MCF 10A (cell line): ENCODE measurements at regions of chr1 and their contacts with region 1.

Region 1: GRCh38 chr1:159960721-159961381 is 6.8 kb upstream of the SLAMF9 start:
- DNase-seq: peak; percentile 71
- H3K4me3 Mint-ChIP-seq: peak overlapping the region; percentile 73
- H3K27ac Mint-ChIP-seq: peak overlapping the region; percentile 75
- H3K4me1 Mint-ChIP-seq: peaks cover 49% of the 10 kb centered on the region
- H3K27me3 Mint-ChIP-seq: no peaks in the 10 kb centered on the region
- CTCF ChIP-seq: no peak

Region 2: GRCh38 chr1:159686599-159687299 is 274.1 kb before region 1 on chr1:
- CTCF ChIA-PET with region 1: no interaction called
- POLR2A ChIA-PET with region 1: no interaction called
- intact Hi-C with region 1: no loop called
- DNase-seq: no peak
- H3K4me3 Mint-ChIP-seq: no peak overlapping the region
- H3K27ac Mint-ChIP-seq: no peak overlapping the region
- H3K4me1 Mint-ChIP-seq: no peaks in the 10 kb centered on the region
- H3K27me3 Mint-ChIP-seq: no peaks in the 10 kb centered on the region
- CTCF ChIP-seq: no peak

Region 3: DNA sequence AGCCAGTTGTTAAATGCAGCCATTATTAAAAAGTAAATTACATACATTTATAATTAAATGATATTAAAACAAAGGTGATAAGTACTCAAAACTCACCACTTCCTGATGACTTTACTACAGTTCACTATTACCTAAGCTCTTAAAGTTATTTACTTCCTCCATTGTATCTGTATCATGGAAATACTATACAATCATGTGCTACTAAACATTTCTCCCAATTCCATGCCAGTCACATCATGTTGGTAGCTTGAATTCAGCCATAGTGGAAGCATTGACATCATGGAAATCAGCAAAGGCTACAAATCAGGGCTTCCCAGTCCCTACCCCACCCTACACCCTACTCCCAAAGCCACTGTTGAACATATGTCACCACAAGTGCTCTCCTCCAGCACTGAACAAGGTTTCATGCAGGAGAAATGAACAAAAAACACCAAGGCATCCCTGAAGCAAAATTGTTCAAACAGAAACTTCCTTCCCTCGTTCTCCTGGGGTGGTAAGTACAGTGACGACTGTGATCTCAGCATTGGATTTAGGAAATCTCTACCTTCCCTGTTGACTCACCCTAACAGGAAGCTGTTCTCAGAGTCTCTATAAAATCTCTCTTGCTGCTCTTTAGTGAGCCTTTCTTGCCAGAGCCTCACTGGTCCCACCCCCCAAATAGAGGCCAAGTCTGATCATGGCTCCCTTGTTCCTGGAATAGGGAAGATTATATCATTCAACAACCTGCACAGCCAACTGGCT is 111.1 kb before region 1 on chr1:
- CTCF ChIA-PET with region 1: no interaction called
- POLR2A ChIA-PET with region 1: no interaction called
- intact Hi-C with region 1: no loop called
- DNase-seq: peak; percentile 75
- H3K4me3 Mint-ChIP-seq: peak overlapping the region; percentile 49
- H3K27ac Mint-ChIP-seq: peak overlapping the region; percentile 74
- H3K4me1 Mint-ChIP-seq: peaks cover 41% of the 10 kb centered on the region
- H3K27me3 Mint-ChIP-seq: no peaks in the 10 kb centered on the region
- CTCF ChIP-seq: no peak

Region 4: GRCh38 chr1:159867683-159868064 is 93.2 kb before region 1 on chr1:
- CTCF ChIA-PET with region 1: no interaction called
- POLR2A ChIA-PET with region 1: no interaction called
- intact Hi-C with region 1: no loop called
- DNase-seq: peak; percentile 92
- H3K4me3 Mint-ChIP-seq: peak overlapping the region; percentile 40
- H3K27ac Mint-ChIP-seq: peak overlapping the region; percentile 85
- H3K4me1 Mint-ChIP-seq: peaks cover 51% of the 10 kb centered on the region
- H3K27me3 Mint-ChIP-seq: no peaks in the 10 kb centered on the region
- CTCF ChIP-seq: no peak

Region 5: DNA sequence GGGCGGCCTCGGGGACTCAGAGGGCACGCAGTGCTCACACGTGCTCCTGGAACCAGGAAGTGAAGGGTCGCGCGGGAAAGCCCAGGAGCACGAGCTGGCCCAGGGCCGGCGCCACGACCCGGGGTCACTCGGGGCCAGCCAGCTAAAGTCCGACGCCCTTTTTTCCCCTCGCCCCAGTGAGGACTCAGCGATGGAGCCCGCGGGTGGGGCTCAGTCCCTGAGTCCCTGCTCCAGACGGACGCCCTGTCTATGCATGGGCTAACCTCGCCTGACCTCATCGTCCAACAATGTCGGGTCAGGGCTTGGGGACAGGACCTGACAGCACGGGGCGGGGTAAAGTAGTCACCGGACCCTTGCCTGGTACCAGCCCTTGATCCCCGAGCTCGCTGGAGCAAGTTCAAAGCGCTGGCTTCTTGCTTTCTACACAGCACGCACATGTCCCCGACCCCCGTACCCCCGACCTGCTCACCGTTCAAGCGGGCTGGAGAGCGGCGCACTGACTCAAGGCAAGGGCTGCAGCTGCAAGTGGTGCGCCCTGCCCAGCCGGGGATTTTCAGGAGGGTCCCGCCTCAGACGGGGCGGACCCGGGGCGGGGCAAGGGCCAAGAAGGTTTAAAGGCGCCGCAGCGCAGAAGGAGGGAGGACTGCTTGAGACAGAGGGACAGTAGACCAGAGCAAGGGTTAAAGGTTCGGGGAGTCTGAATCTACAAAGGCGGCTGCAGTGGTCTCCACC is 35.7 kb before region 1 on chr1 and contains the start of gene TAGLN2:
- CTCF ChIA-PET with region 1: interaction called, 4 read pairs
- POLR2A ChIA-PET with region 1: interaction called, 5 read pairs
- intact Hi-C with region 1: loop called (anchors 1 kb)
- DNase-seq: peak; percentile 97
- H3K4me3 Mint-ChIP-seq: peak within 1 kb of the TSS; percentile 81
- H3K27ac Mint-ChIP-seq: peak within 1 kb of the TSS; percentile 99
- H3K4me1 Mint-ChIP-seq: peaks cover 44% of the 10 kb centered on the region
- H3K27me3 Mint-ChIP-seq: no peaks in the 10 kb centered on the region
- CTCF ChIP-seq: no peak
- total RNA-seq, gene TAGLN2: 464 and 483 TPM in 2 replicates

Region 6: GRCh38 chr1:159945483-159946241 is 15.2 kb before region 1 on chr1 and contains the start of gene IGSF9:
- CTCF ChIA-PET with region 1: interaction called, 10 read pairs
- POLR2A ChIA-PET with region 1: interaction called, 25 read pairs
- intact Hi-C with region 1: no loop called
- DNase-seq: peak; percentile 86
- H3K4me3 Mint-ChIP-seq: peak within 1 kb of the TSS; percentile 69
- H3K27ac Mint-ChIP-seq: no peak within 1 kb of the TSS
- H3K4me1 Mint-ChIP-seq: peaks cover 45% of the 10 kb centered on the region
- H3K27me3 Mint-ChIP-seq: no peaks in the 10 kb centered on the region
- CTCF ChIP-seq: peak; percentile 37
- total RNA-seq, gene IGSF9: 0.25 and 0.44 TPM in 2 replicates

Region 7: DNA sequence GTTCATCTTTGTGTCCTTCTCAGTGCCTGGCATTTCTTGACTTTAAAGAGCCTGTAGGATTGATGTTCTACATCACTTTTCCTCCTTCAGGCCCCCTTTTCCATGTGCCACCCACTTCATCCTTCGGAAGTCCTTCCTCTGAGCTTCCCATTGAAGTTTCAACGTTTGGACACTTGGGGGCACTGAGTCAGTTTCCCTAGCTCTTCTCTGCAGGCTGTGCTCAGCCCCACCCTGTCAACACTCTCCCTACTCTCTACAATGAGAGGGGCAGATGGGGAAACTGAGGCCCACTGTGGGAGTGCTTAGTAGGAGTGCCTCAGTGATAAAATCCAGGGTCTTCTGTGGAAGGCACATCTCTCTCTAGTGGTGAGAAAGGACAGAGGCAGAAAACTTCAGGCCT is 97.2 kb after region 1 on chr1:
- CTCF ChIA-PET with region 1: no interaction called
- POLR2A ChIA-PET with region 1: no interaction called
- intact Hi-C with region 1: no loop called
- DNase-seq: peak; percentile 32
- H3K4me3 Mint-ChIP-seq: no peak overlapping the region
- H3K27ac Mint-ChIP-seq: no peak overlapping the region
- H3K4me1 Mint-ChIP-seq: peaks cover 12% of the 10 kb centered on the region
- H3K27me3 Mint-ChIP-seq: peaks cover 63% of the 10 kb centered on the region
- CTCF ChIP-seq: no peak